Activated CD8-positive, alpha-beta T cell treated with anti-CD3 and anti-CD28 coated beads for 36 hours (primary cell): ENCODE measurements at regions of chr3 and their contacts with region 1.

Region 1: DNA sequence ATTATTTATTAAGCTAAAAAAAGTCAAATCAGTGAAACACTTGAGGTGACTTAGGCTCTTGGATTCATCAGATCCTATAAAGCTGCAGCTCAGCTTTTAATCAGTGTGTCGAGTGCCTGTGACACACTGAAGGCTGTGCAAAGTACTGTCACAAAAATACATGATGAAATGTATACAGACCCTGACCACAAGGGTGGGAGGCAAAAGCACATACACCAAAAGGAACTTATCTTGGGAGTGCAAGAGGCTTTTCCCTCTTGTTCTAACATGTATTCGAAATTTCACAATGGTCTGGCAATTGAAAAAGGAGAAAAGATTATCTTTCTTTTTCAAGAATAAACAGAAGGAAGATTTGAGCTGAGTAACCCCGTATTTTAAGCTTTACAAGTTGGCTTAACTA is 35.9 kb downstream of the VGLL4 start:
- DNase-seq: peak; percentile 29
- ATAC-seq: peak; percentile 29
- H3K4me3 Mint-ChIP-seq: no peak overlapping the region
- H3K27ac Mint-ChIP-seq: no peak overlapping the region
- H3K4me1 Mint-ChIP-seq: peaks cover 84% of the 10 kb centered on the region
- H3K27me3 Mint-ChIP-seq: no peaks in the 10 kb centered on the region
- CTCF ChIP-seq: no peak

Region 2: DNA sequence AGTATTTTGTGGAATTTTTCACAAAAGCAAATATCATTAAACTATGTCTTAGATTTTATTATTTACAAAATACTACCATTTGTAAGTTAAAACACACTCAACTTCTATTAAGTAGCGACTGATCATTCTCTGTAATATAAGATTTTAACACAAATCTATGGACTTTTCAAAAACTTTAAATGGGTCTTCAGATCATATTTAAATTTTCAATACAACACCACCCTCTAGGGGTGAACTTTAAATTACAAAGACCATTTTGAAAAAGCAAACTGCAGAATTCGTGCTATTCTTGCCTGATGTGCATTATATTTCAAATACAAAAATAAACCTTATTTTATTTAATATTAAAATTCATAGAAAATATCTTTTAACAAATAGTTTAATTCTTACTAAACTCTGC is 44.1 kb after region 1 on chr3:
- CTCF ChIA-PET with region 1: interaction called, 10 read pairs
- POLR2A ChIA-PET with region 1: no interaction called
- intact Hi-C with region 1: no loop called
- DNase-seq: no peak
- ATAC-seq: no peak
- H3K4me3 Mint-ChIP-seq: no peak overlapping the region
- H3K27ac Mint-ChIP-seq: no peak overlapping the region
- H3K4me1 Mint-ChIP-seq: peaks cover 19% of the 10 kb centered on the region
- H3K27me3 Mint-ChIP-seq: no peaks in the 10 kb centered on the region
- CTCF ChIP-seq: peak; percentile 70

Region 3: GRCh38 chr3:11690863-11691767 is 83.3 kb after region 1 on chr3:
- CTCF ChIA-PET with region 1: no interaction called
- POLR2A ChIA-PET with region 1: no interaction called
- intact Hi-C with region 1: no loop called
- DNase-seq: no peak
- ATAC-seq: no peak
- H3K4me3 Mint-ChIP-seq: no peak overlapping the region
- H3K27ac Mint-ChIP-seq: no peak overlapping the region
- H3K4me1 Mint-ChIP-seq: no peaks in the 10 kb centered on the region
- H3K27me3 Mint-ChIP-seq: no peaks in the 10 kb centered on the region
- CTCF ChIP-seq: no peak